ENCODE measurements at regions of chr12 and their contacts with region 1.

Region 1: DNA sequence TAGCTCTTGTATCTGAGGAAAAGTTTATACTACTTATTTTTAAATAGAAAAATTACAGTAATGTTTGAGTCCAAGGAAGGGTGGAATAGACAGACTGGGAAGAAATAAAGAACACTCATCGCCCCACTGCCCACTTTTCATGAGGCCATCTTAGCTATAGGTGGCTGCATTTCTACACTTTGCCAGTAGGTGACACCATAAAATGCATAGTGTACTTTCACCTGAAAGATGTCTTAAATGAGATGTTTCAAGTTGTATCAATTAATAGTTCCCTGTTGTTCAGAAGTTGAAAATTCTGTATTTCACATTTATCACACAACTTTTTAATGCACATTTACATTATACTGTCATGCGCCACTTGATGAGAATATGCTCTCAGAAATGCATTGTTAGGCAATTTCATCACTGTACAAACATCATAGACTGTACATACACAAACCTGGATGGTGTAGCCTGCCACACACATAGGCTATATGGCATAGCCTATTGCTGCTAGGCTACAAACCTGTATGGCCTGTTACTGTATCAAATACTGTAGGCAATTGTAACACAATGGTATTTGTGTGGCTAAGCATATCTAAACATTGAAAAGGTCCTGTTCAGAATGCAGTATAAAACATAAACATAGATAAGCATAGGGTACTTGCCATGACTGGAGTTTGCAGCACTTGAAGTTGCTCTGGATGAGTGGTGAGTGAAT is 27.6 kb downstream of the PMCH start:
- DNase-seq: no peak
- ATAC-seq: peak; percentile 73
- H3K4me3 ChIP-seq: no peak overlapping the region
- H3K27ac ChIP-seq: no peak overlapping the region
- H3K4me1 ChIP-seq: peaks cover 5% of the 10 kb centered on the region
- H3K27me3 ChIP-seq: no peaks in the 10 kb centered on the region
- CTCF ChIP-seq: peak; percentile 72 to 79 (median 78)
- EP300 ChIP-seq: no peak
- POLR2A ChIP-seq: no peak
- RAD21 ChIP-seq: peak; percentile 80

Region 2: GRCh38 chr12:102300824-102301461 is 130.9 kb after region 1 on chr12:
- CTCF ChIA-PET with region 1: interaction called, 14 read pairs
- POLR2A ChIA-PET with region 1: no interaction called
- RAD21 ChIA-PET with region 1: interaction called, 3 read pairs
- SMC1A ChIA-PET with region 1: interaction called, 3 read pairs
- in situ Hi-C with region 1: no loop called
- intact Hi-C with region 1: no loop called
- DNase-seq: peak; percentile 61
- ATAC-seq: peak; percentile 98
- H3K4me3 ChIP-seq: no peak overlapping the region
- H3K27ac ChIP-seq: no peak overlapping the region
- H3K4me1 ChIP-seq: no peaks in the 10 kb centered on the region
- H3K27me3 ChIP-seq: no peaks in the 10 kb centered on the region
- CTCF ChIP-seq: peak; percentile 41 to 47 (median 42); a peak in 4 of 6 replicates
- EP300 ChIP-seq: no peak
- POLR2A ChIP-seq: no peak
- RAD21 ChIP-seq: peak; percentile 57

Region 3: GRCh38 chr12:102543494-102544485 is 373.7 kb after region 1 on chr12:
- CTCF ChIA-PET with region 1: interaction called, 57 read pairs
- POLR2A ChIA-PET with region 1: no interaction called
- RAD21 ChIA-PET with region 1: interaction called, 32 read pairs
- SMC1A ChIA-PET with region 1: interaction called, 31 read pairs
- in situ Hi-C with region 1: no loop called
- intact Hi-C with region 1: loop called (anchors 1 kb)
- DNase-seq: no peak
- ATAC-seq: peak; percentile 80
- H3K4me3 ChIP-seq: no peak overlapping the region
- H3K27ac ChIP-seq: no peak overlapping the region
- H3K4me1 ChIP-seq: peaks cover 6% of the 10 kb centered on the region
- H3K27me3 ChIP-seq: no peaks in the 10 kb centered on the region
- CTCF ChIP-seq: peak; percentile 42 to 46 (median 45); a peak in 5 of 6 replicates
- EP300 ChIP-seq: no peak
- POLR2A ChIP-seq: no peak
- RAD21 ChIP-seq: peak; percentile 62

Region 4: DNA sequence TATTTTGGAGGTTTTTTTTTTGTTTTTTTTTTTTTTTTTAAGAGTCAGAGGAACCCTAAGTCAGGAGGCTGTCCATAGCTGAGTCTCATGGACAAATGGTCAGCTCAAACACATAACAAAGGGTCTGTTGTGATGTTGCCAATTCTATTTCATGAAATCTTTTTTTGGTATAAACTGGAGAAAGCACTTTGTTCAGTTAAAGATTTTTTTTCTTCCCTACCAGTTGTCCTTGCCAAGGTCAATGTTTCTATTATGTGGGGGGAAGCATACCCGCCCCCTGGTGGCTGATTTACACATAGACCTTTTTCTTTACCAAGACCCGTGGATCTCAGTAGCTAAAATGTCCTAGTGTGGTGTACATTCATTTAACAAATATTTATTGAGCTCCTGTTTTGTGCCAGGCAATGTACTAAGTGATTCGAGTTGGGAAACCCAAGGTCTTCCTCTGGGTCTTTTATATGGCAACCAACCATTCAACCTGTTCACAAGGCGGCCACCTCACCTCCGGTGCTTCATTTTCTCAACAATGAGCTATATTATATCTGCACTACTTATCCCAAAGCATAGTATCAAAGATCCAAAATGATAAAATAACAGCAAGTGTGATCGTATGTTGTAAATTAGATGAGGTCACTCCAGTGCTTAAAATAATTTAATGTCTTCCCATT is 532.5 kb after region 1 on chr12:
- CTCF ChIA-PET with region 1: interaction called, 14 read pairs
- POLR2A ChIA-PET with region 1: no interaction called
- RAD21 ChIA-PET with region 1: interaction called, 15 read pairs
- SMC1A ChIA-PET with region 1: interaction called, 17 read pairs
- in situ Hi-C with region 1: no loop called
- intact Hi-C with region 1: loop called (anchors 2 kb)
- DNase-seq: no peak
- ATAC-seq: peak; percentile 78
- H3K4me3 ChIP-seq: no peak overlapping the region
- H3K27ac ChIP-seq: no peak overlapping the region
- H3K4me1 ChIP-seq: no peaks in the 10 kb centered on the region
- H3K27me3 ChIP-seq: no peaks in the 10 kb centered on the region
- CTCF ChIP-seq: peak; percentile 40 to 54 (median 49)
- EP300 ChIP-seq: no peak
- POLR2A ChIP-seq: no peak
- RAD21 ChIP-seq: peak; percentile 61

Measured in GM12878 (cell line).